ENCODE measurements at regions of chr17 and their contacts with region 1.

Region 1: DNA sequence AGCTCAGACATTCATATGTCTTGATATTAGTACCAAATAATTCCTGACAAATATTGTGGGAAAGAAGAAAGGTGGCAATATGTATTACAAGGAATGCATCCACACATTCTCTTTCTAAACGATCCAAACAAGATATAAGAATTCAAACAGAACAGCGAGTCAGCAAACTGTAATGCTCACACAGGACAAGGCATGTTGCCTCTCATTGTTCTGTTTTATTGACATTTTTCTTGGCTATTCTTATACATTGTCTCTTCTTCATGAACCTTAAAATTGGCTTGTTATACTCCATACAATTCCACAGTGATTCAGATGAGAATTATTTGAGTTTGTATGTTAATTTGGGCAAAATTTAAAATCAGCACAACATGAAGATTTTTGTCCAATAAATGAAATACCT is 189.1 kb downstream of the HS3ST3B1 start:
- DNase-seq: no peak
- H3K4me3 ChIP-seq: no peak overlapping the region
- H3K27ac ChIP-seq: no peak overlapping the region
- H3K4me1 ChIP-seq: no peaks in the 10 kb centered on the region
- H3K27me3 ChIP-seq: no peaks in the 10 kb centered on the region
- CTCF ChIP-seq: no peak

Region 2: DNA sequence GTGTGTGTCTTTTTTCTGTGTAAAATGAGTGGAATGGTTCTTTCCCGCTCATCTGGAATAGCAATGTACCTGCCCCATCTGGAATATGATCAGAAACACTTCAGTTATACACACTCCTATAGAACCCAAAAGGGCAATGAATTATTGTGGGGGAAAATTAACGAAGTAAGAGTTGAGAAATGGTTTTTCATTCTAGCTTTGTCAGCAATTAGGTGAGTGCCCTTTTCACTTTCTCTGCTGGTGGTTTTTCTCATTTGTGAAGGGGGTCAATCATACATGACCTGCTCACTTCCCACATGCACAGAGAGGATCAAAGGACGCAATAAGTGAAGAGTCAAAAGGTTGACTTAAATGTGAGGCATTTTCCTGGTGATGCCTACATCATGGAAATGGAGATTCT is 21.1 kb before region 1 on chr17:
- CTCF ChIA-PET with region 1: no interaction called
- POLR2A ChIA-PET with region 1: no interaction called
- intact Hi-C with region 1: loop called (anchors 1 kb)
- DNase-seq: no peak
- H3K4me3 ChIP-seq: no peak overlapping the region
- H3K27ac ChIP-seq: no peak overlapping the region
- H3K4me1 ChIP-seq: no peaks in the 10 kb centered on the region
- H3K27me3 ChIP-seq: no peaks in the 10 kb centered on the region
- CTCF ChIP-seq: no peak

Measured in PC-9 (cell line).